Activated T-helper 1 cell treated with anti-CD3 and anti-CD28 coated beads, Interleukin-12 subunit alpha, Interleukin-12 subunit beta, Interleukin-2, Interleukin-4 antibody, amounts not matched to agents 30 ng/mL and 10 ng/mL and 1 ng/mL, durations not matched to agents 14 hours and 24 hours and 36 hours (primary cell): ENCODE measurements at regions of chr18 and their contacts with region 1.

Region 1: DNA sequence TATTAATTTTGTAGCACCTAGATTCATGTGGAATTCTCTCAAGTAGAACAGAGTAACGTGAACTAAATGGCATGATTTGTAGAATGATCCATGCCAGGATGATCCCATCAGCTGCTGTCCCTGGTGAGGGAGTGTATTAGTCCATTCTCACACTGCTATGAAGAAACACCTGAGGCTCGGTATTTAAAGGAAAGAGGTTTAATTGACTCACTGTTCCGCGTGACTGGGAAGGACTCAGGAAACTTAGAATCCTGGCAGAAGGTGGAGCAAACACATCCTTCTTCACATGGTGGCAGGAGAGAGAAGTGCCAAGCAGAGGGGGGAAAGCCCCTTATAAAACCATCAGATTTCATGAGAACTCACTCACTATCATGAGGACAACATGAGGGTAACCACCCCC is 312.6 kb downstream of the PTPRM start:
- DNase-seq: no peak
- H3K4me3 Mint-ChIP-seq: no peak overlapping the region
- H3K27ac Mint-ChIP-seq: no peak overlapping the region
- H3K4me1 Mint-ChIP-seq: no peaks in the 10 kb centered on the region
- H3K27me3 Mint-ChIP-seq: no peaks in the 10 kb centered on the region

Region 2: DNA sequence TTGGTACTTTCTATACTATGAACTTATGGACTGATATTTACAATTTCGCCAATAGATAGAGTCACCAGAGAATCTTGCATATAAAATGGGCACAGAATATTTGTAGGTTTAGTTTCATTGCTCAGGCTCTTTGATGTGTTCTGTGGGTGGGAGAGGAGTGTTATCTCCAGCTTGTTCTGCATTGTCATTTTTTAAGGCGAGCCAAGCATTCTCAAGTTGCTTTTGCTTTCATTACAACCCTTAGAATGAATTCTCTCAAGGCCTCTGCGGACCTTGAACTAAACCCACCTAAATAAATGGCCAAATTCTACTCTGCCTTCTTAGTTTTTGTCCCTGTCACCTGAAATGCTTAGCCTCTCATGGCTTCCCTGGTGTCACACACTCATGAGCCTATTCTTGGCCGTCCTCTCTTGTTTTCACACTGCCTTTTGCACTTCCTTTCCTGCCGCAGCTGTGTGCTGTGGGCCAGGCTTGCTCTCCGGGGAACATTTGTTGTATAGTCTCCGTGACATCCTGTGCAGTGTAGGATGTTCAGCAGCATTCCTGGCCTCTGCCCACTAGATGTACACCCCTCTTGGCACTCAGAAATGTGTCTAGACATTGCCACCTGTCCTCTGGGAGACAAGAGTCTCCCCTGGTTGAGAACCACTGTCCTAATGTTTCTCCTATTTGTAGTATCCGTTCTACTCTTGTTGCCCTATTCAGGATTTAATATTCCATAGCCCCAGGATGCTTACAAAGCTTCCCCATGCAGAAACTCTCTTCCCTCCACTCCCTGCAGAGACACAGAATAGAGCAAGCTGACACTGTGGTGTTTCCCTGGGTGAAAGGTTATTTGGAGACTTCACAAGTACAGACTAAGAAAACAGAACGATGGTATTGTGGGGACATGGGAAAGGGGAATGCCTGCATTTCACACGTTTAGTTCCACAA is 57.0 kb before region 1 on chr18:
- intact Hi-C with region 1: loop called (anchors 10 kb)
- DNase-seq: no peak
- H3K4me3 Mint-ChIP-seq: no peak overlapping the region
- H3K27ac Mint-ChIP-seq: no peak overlapping the region
- H3K4me1 Mint-ChIP-seq: no peaks in the 10 kb centered on the region
- H3K27me3 Mint-ChIP-seq: no peaks in the 10 kb centered on the region